Left lung (tissue), 14 donors: ENCODE measurements at regions of chr7 and their contacts with region 1.

Region 1: DNA sequence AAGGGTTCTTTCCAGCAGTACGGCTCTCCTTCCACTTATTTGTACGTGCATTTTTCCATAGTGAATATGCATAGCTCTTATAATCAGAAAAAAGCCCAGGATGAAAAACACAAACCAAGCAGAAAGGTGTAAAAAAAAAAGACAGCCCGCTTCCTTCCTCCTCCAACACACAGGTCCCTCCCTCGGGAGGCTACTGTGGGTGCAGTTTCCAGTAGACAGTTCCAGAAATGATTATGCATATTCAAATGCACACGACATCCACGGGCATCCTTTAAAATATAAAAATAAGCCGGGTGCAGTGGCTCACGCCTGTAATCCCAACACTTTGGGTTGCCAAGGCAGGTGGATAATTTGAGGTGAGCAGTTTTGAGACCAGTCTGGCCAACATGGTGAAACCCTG is 59.9 kb downstream of the TNRC18 start:
- DNase-seq: no peak
- ATAC-seq: no peak
- H3K4me3 ChIP-seq: no peak overlapping the region
- H3K27ac ChIP-seq: no peak overlapping the region
- H3K4me1 ChIP-seq: peaks cover 4 to 36% of the 10 kb centered on the region in 2 donors
- H3K27me3 ChIP-seq: no peaks in the 10 kb centered on the region
- CTCF ChIP-seq: no peak

Region 2: GRCh38 chr7:5406957-5407945 is 43.5 kb after region 1 on chr7:
- intact Hi-C with region 1: no loop called
- DNase-seq: peak in 1 of 4 donors; percentile 63
- ATAC-seq: no peak
- H3K4me3 ChIP-seq: no peak overlapping the region
- H3K27ac ChIP-seq: peak overlapping the region in 1 of 2 donors; percentile 57
- H3K4me1 ChIP-seq: peaks cover 3 to 49% of the 10 kb centered on the region in 2 donors
- H3K27me3 ChIP-seq: no peaks in the 10 kb centered on the region
- CTCF ChIP-seq: no peak

Region 3: DNA sequence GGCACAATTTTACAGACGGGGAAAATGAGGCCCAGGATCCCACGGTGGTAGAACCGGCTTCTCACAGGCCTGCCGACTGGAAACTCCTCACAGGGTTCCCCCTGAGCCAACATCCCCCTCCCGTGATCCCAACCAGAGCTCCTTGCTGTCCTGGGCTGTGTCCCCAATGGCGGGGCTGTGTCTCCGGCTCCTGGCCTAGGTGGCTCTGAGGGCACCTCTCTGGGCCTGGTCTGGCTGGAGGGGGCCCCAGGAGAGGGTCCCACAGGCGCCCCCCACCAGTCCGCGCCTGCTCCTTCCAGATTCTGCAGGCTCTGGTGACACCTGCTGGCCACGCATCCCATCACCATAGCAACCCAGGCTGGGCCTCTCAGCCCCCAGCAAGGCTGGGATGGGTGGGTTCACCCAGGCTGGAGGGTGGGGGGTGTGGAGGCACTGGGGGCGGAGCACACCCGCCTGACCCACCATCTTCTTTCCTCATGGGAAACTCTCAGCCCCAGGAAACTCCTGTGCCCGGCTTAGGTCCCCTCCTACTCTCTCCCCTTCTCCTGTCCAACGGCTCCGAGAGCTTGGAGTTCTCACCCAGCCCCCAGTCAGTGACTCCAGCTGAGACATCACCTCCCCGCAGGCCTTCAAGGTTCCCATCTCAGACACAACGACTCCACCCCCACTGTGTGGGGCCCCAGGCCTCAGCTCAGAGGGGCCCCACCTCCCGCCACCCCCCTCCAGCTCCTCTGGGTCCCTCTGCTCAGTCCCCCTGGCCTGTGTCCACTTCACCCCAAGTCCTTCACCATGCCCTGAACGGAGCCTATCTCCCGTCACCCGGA is 87.0 kb after region 1 on chr7:
- intact Hi-C with region 1: loop called in 1 of 2 experiments (anchors 10 kb)
- DNase-seq: peak; percentile 52 to 85 (median 66)
- ATAC-seq: peak; percentile 79
- H3K4me3 ChIP-seq: no peak overlapping the region
- H3K27ac ChIP-seq: no peak overlapping the region
- H3K4me1 ChIP-seq: peaks cover 0 to 8% of the 10 kb centered on the region in 2 donors
- H3K27me3 ChIP-seq: peaks cover 0 to 7% of the 10 kb centered on the region in 2 donors
- CTCF ChIP-seq: peak; percentile 35 to 67